WTC11 (cell line): ENCODE measurements at regions of chr7 and their contacts with region 1.

Region 1: DNA sequence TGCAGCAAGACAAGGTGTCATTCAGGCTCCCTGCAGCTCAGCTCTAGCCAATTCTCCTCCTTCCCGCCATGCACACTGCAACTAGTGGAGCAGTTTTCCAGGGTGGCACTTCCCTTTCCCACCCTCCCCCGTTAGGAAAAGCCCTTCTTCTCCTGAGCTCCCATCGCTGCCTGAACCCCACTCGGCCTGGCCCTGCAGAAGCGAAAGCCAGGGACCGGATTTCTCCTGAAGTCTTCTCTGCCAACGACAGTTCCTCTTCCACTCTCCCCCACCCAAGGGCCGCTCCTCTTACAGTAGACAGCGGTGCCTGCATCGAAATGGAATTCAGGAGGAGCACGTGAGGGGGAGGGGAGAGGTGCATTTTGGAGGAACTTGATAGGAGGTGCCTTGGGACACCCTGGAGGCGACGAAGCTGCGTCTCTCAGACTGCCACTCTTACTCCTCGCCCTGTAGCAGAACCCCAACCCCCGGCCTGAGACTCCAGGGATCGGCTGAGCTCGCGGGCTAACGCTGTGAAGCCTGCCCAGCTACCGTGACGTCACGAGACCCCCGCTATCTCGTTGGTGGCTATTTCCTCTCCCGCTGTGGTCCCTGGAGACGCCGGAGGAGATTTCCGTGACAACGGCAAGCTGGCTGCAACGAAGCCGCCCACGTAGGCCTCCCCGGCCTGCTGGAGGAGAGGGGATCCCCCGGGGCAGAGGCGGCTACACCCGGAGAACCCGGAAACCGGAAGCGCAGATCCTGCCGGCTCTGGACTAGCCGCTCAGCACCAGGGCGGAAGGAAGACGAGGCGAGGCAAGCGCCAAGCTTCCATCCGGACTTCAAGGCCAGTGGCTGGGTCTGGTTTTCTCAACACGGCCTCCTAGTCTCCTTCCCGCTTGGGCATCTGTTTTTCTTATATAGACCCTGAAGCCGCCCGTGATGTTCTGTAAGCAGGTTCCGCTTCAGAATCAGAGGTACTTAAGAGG is 109.7 kb downstream of the RALA start:
- DNase-seq: peak; percentile 97
- ATAC-seq: peak; percentile 92
- H3K4me3 Mint-ChIP-seq: peak overlapping the region; percentile 69
- H3K27ac Mint-ChIP-seq: peak overlapping the region; percentile 95
- H3K4me1 Mint-ChIP-seq: peaks cover 30% of the 10 kb centered on the region
- H3K27me3 Mint-ChIP-seq: peaks cover 23% of the 10 kb centered on the region
- CTCF ChIP-seq: no peak

Region 2: GRCh38 chr7:39623018-39623731 is 109.9 kb before region 1 on chr7 and contains the start of gene RALA:
- CTCF ChIA-PET with region 1: interaction called, 4 read pairs
- POLR2A ChIA-PET with region 1: interaction called, 21 read pairs
- DNase-seq: peak; percentile 92
- ATAC-seq: peak; percentile 96
- H3K4me3 Mint-ChIP-seq: peak within 1 kb of the TSS; percentile 91
- H3K27ac Mint-ChIP-seq: peak within 1 kb of the TSS; percentile 91
- H3K4me1 Mint-ChIP-seq: peaks cover 50% of the 10 kb centered on the region
- H3K27me3 Mint-ChIP-seq: no peaks in the 10 kb centered on the region
- CTCF ChIP-seq: no peak
- total RNA-seq, gene RALA: 57.3 to 59.8 TPM (median 59.3 TPM) in 3 replicates

Region 3: DNA sequence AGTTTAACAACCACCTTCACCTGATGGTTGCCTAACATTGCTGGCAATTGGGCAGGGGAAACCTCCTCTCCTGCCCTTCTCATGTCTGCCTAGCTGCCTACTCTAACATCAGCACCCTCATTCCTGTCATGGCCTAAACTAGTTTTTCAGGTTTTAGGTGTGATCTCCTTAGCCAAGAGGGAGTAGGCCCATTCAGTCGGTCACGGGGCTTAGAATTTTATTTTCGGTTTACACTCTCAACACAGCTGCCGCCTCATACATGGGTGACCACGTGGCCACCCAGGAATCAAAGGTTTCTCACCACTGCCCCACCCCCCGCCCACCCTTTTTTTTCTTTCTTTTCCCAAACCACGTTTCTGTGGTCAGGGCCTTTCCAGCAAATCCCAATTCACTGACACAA is 12.5 kb before region 1 on chr7:
- CTCF ChIA-PET with region 1: interaction called, 10 read pairs
- POLR2A ChIA-PET with region 1: interaction called, 7 read pairs
- DNase-seq: no peak
- ATAC-seq: peak; percentile 58
- H3K4me3 Mint-ChIP-seq: no peak overlapping the region
- H3K27ac Mint-ChIP-seq: peak overlapping the region; percentile 59; the same call in 1 of the 2 replicates
- H3K4me1 Mint-ChIP-seq: peaks cover 53% of the 10 kb centered on the region
- H3K27me3 Mint-ChIP-seq: peaks cover 3% of the 10 kb centered on the region
- CTCF ChIP-seq: no peak

Region 4: GRCh38 chr7:39754326-39755120 is 21.4 kb after region 1 on chr7:
- CTCF ChIA-PET with region 1: no interaction called
- POLR2A ChIA-PET with region 1: no interaction called
- DNase-seq: peak; percentile 30
- ATAC-seq: peak; percentile 74
- H3K4me3 Mint-ChIP-seq: no peak overlapping the region
- H3K27ac Mint-ChIP-seq: peak overlapping the region; percentile 71
- H3K4me1 Mint-ChIP-seq: peaks cover 27% of the 10 kb centered on the region
- H3K27me3 Mint-ChIP-seq: peaks cover 10% of the 10 kb centered on the region
- CTCF ChIP-seq: no peak